Breast epithelium (tissue), 4 donors: ENCODE measurements at regions of chr7 and their contacts with region 1.

Region 1: GRCh38 chr7:75847707-75848106 is 31.1 kb upstream of the RHBDD2 start:
- DNase-seq: no peak
- H3K4me3 ChIP-seq: no peak overlapping the region
- H3K27ac ChIP-seq: no peak overlapping the region
- H3K4me1 ChIP-seq: no peaks in the 10 kb centered on the region
- H3K27me3 ChIP-seq: no peaks in the 10 kb centered on the region
- CTCF ChIP-seq: no peak
- POLR2A ChIP-seq: no peak

Region 2: DNA sequence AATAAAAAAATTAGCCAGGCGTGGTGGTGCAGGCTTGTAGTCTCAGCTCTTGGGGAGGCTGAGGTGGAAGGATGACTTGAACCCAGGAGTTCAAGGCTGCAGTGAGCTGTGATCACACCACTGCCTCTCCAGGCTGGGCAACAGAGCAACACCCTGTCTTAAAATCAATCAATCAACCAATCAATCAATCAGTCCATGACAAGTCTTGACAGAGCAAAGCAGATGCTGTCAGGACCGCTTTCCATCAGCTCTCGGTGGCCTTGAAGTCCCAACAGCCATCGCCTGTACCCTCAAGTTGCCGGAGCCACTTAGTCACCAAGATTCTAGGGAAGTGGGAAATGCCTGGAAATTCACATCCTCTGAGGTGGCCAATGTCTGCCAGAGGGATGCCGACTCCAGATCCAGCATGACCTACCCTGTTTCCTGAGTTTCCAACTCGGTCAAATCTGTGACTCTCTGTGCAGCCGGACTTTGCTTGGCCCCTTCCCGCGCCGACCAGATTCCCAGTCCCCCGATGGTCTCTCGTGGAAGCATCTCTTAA is 33.2 kb before region 1 on chr7:
- intact Hi-C with region 1: no loop called
- DNase-seq: no peak
- H3K4me3 ChIP-seq: no peak overlapping the region
- H3K27ac ChIP-seq: no peak overlapping the region
- H3K4me1 ChIP-seq: no peaks in the 10 kb centered on the region
- H3K27me3 ChIP-seq: no peaks in the 10 kb centered on the region
- CTCF ChIP-seq: no peak
- POLR2A ChIP-seq: no peak

Region 3: DNA sequence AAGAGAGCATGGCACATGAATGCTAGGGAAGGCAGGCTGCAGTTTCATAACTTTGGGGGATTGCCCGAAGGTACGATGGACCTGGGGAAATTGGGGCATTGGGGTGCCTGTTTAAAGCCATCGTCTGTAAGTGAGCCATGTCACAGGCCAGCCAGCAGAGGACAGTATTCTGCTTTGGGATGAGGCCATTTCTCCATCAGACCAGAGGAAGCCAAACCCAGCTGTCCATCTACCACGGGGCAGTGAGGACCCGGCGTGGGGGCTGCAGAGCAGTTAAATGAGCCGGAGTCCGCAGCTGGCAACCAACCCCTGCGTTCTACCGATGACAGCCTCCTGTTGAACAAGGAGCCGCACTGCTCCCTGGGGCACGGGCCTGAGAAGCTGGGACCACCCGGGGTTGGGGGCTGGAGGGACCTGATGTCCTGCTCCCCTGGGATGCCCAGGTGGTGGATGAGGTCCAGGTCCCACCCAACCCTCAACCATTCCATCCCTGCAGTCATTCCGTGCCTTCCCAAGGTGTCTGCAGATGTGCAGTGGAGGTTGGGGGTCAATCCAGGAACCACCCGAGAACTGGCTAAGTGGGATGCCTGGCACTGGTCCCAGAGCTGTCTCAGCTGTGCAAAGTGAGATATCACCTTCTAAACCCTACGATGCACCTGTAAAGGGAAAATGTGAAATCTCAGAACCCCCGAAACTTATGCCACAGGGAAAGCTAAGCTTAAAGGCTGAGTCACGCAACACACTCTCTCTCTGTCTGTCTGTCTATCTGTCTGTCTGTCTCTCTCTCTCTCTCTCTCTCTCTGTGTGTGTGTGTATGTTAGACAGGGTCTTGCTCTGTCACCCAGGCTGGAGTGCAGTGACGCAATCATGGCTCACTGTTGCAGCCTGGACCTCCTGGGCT is 19.0 kb after region 1 on chr7:
- intact Hi-C with region 1: loop called (anchors 1 kb)
- DNase-seq: peak in 1 of 2 donors; percentile 32
- H3K4me3 ChIP-seq: no peak overlapping the region
- H3K27ac ChIP-seq: no peak overlapping the region
- H3K4me1 ChIP-seq: no peaks in the 10 kb centered on the region
- H3K27me3 ChIP-seq: no peaks in the 10 kb centered on the region
- CTCF ChIP-seq: peak; percentile 64 to 90 (median 87)
- POLR2A ChIP-seq: no peak

Region 4: DNA sequence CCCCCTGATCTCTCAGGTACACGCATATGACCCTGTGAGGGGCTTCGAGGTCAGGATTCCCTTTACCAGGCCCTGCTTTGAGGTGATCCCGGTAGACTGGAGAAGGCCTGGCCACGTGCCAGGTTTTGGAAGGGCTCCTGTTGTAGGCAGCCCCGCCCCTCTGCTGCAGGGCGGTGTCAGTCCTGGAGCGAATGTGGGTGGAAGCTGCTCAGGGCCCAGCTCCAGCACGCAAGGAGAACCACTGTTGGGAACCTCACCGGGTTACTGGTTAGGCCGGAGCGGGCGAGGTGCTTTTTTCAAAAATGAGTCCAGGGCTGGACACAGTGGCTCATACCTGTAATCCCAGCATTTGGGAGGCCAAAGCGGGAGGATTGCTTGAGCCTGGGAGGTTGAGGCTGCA is 215.9 kb after region 1 on chr7:
- intact Hi-C with region 1: no loop called
- DNase-seq: peak; percentile 40 to 74
- H3K4me3 ChIP-seq: no peak overlapping the region
- H3K27ac ChIP-seq: no peak overlapping the region
- H3K4me1 ChIP-seq: no peaks in the 10 kb centered on the region
- H3K27me3 ChIP-seq: no peaks in the 10 kb centered on the region
- CTCF ChIP-seq: no peak
- POLR2A ChIP-seq: no peak